ENCODE measurements at regions of chr1 and their contacts with region 1.

Region 1: GRCh38 chr1:28886731-28887418 is 27.5 kb upstream of the EPB41 start:
- ATAC-seq: peak; percentile 53 to 81 (median 65)
- H3K4me3 ChIP-seq: peak overlapping the region; percentile 73 to 97 (median 92)
- H3K27ac ChIP-seq: no peak overlapping the region
- H3K4me1 ChIP-seq: peaks cover 19 to 24% of the 10 kb centered on the region in 2 donors

Region 2: GRCh38 chr1:28775121-28775944 is 111.5 kb before region 1 on chr1:
- in situ Hi-C with region 1: no loop called
- ATAC-seq: peak; percentile 19 to 96 (median 58)
- H3K4me3 ChIP-seq: no peak overlapping the region
- H3K27ac ChIP-seq: no peak overlapping the region
- H3K4me1 ChIP-seq: no peaks in the 10 kb centered on the region

Region 3: DNA sequence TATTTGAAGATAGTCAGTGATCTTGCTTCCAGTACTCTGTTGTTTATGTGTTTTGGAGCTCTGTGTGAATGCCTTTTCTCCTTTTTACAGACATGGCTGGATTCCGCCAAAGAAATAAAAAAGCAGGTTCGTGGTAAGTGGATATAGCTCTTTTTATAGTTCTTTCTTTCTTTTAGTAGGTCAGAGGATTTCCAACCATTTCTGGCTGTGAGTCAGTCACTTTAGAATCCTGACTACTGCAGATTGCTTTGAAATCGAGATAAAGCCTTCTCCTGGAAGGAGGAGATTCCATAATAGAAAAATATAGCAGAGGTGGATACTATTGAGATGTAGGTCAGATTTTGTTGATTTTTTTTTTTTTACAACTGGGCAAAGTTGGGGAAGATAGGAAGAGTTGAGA is 124.9 kb after region 1 on chr1:
- in situ Hi-C with region 1: no loop called
- ATAC-seq: no peak
- H3K4me3 ChIP-seq: no peak overlapping the region
- H3K27ac ChIP-seq: no peak overlapping the region
- H3K4me1 ChIP-seq: no peaks in the 10 kb centered on the region

Region 4: DNA sequence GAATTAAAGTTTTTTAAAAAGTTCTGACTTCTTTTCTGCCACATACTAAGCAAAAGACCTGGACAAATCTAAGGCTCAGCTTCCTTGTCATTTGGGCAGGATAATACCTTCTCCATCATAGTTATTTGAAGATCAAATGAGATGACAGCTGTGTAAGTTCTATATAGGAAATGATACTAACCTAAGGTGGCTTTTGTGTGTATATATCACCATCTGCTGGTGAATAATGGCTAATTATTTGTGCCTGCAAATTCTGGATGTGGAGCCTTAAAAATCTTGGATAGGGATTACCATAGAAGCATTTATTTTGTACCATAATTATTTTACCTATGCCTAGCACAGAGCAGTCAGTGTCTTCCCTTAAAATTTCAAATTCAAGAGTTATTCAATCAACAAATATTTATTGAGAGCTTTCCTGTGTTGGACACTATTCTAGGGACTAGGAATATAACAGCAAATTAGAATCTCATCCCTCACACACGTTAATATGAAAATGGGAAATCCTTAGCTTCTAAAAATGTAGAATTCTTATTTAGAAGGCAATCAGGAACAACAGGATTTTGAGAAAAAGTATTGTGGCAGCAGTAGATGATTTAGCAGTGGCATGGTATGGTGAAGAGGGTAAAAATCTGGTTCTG is 147.1 kb after region 1 on chr1:
- in situ Hi-C with region 1: loop called in 4 of 9 experiments (anchors 5 to 25 kb)
- ATAC-seq: peak; percentile 28 to 56 (median 44)
- H3K4me3 ChIP-seq: no peak overlapping the region
- H3K27ac ChIP-seq: no peak overlapping the region
- H3K4me1 ChIP-seq: peaks cover 4 to 9% of the 10 kb centered on the region in 2 donors

Region 5: DNA sequence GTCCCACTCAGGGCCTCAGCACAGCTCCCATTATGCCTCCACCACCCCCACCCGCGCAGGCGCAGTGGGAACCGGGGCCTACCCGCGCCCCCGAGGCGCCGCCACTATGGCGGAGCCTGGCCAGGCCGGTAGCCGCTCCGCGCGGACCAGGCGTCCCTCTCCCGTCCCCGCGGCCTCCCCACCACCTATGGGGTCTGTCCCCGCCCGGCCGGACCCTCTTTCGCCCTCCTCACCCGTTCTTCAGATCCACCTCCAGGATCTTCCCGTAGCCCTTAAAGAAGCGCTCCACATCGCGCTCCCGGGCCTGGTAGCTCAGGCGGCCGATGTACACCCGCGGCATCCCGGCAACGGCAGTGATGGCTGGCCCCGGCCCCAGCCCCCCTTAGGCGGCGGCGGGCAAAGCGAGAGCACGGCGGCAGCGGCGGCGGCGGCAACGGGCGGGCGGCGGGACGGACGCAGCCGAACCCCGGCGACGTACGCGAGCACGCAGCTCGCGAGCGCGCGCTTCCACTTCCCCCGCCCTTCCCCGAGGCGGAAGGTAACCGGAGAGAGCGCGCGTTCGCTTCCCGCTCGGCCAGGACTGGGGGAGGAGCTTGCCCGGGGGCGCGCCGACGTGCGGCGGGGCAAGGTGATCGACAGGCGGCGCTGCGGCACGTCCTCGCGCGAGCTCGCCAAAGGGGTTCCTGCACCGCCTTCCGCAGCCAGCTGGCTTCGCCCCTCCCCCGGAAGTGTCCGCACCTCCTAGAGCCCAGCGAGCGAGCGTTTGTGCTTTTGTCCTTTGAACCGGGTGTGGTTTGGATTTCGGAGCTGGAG is 294.7 kb after region 1 on chr1 and contains the start of gene SRSF4:
- in situ Hi-C with region 1: loop called in 6 of 9 experiments (anchors 25 kb)
- ATAC-seq: peak; percentile 79 to 91 (median 90)
- H3K4me3 ChIP-seq: peak within 1 kb of the TSS; percentile 73 to 98 (median 78)
- H3K27ac ChIP-seq: peak within 1 kb of the TSS; percentile 99 to 100
- H3K4me1 ChIP-seq: peaks cover 17 to 25% of the 10 kb centered on the region in 2 donors
- total RNA-seq, gene SRSF4: 43.5 to 98.4 (median 79.6) TPM

Region 6: DNA sequence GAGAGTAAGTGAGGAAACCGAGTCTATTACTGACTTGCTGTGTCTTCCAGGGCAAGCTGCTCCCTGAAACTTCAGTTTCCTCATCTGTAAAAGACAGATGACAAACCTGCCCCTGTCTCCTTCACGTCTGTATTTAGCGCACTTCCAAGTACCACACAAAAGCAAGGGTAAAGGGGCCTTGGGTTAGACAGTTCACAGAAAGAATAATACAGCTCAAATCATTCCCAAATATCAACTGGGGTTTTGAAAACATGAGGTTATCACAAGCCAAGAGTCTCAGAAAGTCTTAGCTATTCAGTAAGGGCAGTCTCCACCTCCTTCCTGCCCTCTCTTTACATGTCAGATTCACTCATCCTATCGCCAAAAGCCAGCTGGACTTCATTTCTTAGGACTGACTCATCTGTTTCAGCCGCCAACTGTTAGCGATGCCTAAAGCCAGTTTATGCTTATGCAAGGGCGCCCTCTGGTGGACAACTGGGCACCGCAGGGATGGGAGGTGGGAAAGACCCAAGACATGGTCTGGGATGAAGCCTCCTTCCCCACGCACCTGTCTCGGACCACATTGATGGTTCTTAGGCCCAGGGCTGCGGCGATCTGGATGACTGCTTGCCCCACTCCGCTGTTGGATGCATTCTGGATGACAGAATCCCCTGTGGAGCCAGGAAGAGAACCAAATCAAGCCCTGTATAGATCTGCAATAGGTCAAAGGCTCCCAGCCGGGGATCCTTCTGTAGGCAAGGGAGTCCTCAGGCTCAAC is 315.9 kb after region 1 on chr1:
- in situ Hi-C with region 1: loop called (anchors 10 to 25 kb)
- ATAC-seq: peak; percentile 97 to 100 (median 98)
- H3K4me3 ChIP-seq: no peak overlapping the region
- H3K27ac ChIP-seq: no peak overlapping the region
- H3K4me1 ChIP-seq: peaks cover 0 to 4% of the 10 kb centered on the region in 2 donors

Region 7: GRCh38 chr1:30718636-30719405 is 1831.9 kb after region 1 on chr1:
- in situ Hi-C with region 1: loop called in 1 of 9 experiments (anchors 25 kb)
- ATAC-seq: peak; percentile 63 to 75 (median 66)
- H3K4me3 ChIP-seq: peak overlapping the region; percentile 28 to 41 (median 31)
- H3K27ac ChIP-seq: peak overlapping the region; percentile 96 to 98
- H3K4me1 ChIP-seq: peaks cover 6 to 8% of the 10 kb centered on the region in 2 donors

Measured in motor neuron (in vitro differentiated cells).